ENCODE measurements at regions of chr4 and their contacts with region 1.

Region 1: GRCh38 chr4:54227256-54228055 is 1.6 kb upstream of the PDGFRA start:
- H3K4me3 Mint-ChIP-seq: peak overlapping the region; percentile 67
- H3K27ac Mint-ChIP-seq: no peak overlapping the region
- H3K4me1 Mint-ChIP-seq: peaks cover 69% of the 10 kb centered on the region
- H3K27me3 Mint-ChIP-seq: peaks cover 100% of the 10 kb centered on the region

Region 2: DNA sequence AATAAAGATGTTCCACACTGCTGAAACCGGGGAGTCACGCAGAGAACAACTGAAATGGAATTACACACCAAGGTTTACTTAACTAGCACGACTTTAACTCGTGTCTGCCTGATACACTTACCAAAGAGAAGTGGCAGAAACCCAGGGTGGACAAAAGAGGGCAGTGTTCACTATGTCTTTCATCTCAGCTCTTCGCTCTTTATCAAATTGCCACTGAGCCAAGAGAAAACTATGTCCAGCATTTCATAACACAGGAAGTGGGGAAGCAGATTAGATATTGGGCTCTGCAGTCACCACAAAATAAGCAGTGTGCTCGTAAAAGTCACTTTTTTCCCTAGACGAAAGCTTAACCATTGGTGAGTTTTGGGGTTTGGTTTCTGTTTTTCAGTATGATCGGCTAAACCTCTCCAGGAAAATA is 318.8 kb before region 1 on chr4:
- intact Hi-C with region 1: loop called (anchors 2 kb)
- H3K4me3 Mint-ChIP-seq: peak overlapping the region; percentile 26
- H3K27ac Mint-ChIP-seq: no peak overlapping the region
- H3K4me1 Mint-ChIP-seq: peaks cover 20% of the 10 kb centered on the region
- H3K27me3 Mint-ChIP-seq: peaks cover 27% of the 10 kb centered on the region

Region 3: DNA sequence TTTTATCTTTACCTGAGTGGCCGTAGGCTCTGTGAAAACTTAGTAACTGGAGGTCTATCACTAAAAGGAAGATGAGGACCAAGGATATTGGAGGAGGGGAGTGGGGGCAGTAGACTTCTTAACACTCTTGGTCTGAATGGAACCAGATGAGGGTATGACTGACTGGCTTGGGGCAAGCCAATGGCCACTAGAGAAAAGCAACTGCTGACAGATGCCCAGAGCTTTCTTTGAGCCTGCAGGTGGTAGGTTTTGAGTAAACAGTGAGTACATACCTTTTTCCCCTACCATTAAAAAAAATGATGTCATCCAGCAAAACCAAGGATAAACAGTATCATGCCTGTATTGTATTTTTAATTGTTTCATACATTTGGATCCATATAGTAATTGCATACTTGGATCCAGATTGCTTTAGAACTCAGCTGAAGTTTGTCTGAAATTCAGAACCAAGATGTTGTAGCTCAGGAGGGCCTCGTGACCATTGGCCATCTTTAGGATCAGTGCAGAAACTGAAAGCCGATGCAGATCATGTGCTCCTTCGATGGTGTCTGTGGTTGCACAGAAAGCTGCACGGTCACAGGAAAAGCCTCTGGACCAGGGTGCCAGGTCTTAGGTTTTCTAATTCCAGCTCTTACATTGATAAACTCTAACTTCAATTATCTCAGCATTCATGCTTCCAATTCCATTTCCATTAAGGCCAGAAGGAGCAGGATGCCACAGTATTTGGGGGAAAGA is 132.6 kb after region 1 on chr4:
- intact Hi-C with region 1: no loop called
- H3K4me3 Mint-ChIP-seq: no peak overlapping the region
- H3K27ac Mint-ChIP-seq: no peak overlapping the region
- H3K4me1 Mint-ChIP-seq: no peaks in the 10 kb centered on the region
- H3K27me3 Mint-ChIP-seq: no peaks in the 10 kb centered on the region